ENCODE measurements at regions of chr4 and their contacts with region 1.

Region 1: GRCh38 chr4:112214390-112215264 is 17.0 kb upstream of the AP1AR start:
- DNase-seq: no peak
- H3K4me3 Mint-ChIP-seq: no peak overlapping the region
- H3K27ac Mint-ChIP-seq: no peak overlapping the region
- H3K4me1 Mint-ChIP-seq: peaks cover 8% of the 10 kb centered on the region
- H3K27me3 Mint-ChIP-seq: no peaks in the 10 kb centered on the region

Region 2: DNA sequence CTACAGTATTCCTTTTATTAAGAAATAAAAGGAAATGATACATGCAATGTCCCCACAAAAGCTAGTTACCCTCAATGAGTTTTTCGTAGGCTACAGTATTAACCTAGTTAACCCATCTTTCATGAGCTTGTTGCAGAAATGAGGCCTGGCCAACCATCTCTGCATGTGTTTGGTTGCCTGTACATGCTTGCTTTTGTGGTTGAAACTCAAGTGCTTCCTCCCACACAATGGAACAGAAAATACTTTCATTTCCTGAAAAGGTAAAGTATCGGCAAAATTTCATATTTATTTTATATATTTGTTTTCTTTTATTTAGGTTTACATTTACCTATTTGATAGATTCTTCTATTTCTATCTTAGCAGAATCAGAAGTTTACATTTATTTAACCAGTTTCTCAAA is 284.0 kb before region 1 on chr4:
- CTCF ChIA-PET with region 1: no interaction called
- POLR2A ChIA-PET with region 1: no interaction called
- intact Hi-C with region 1: no loop called
- DNase-seq: no peak
- H3K4me3 Mint-ChIP-seq: no peak overlapping the region
- H3K27ac Mint-ChIP-seq: no peak overlapping the region
- H3K4me1 Mint-ChIP-seq: no peaks in the 10 kb centered on the region
- H3K27me3 Mint-ChIP-seq: peaks cover 2% of the 10 kb centered on the region

Region 3: GRCh38 chr4:112099701-112100297 is 114.8 kb before region 1 on chr4:
- CTCF ChIA-PET with region 1: interaction called, 10 read pairs
- POLR2A ChIA-PET with region 1: no interaction called
- intact Hi-C with region 1: no loop called
- DNase-seq: no peak
- H3K4me3 Mint-ChIP-seq: no peak overlapping the region
- H3K27ac Mint-ChIP-seq: no peak overlapping the region
- H3K4me1 Mint-ChIP-seq: peaks cover 1% of the 10 kb centered on the region
- H3K27me3 Mint-ChIP-seq: peaks cover 2% of the 10 kb centered on the region

Region 4: GRCh38 chr4:112189754-112190153 is 24.9 kb before region 1 on chr4:
- CTCF ChIA-PET with region 1: no interaction called
- POLR2A ChIA-PET with region 1: no interaction called
- intact Hi-C with region 1: no loop called
- DNase-seq: no peak
- H3K4me3 Mint-ChIP-seq: no peak overlapping the region
- H3K27ac Mint-ChIP-seq: no peak overlapping the region
- H3K4me1 Mint-ChIP-seq: peaks cover 3% of the 10 kb centered on the region
- H3K27me3 Mint-ChIP-seq: no peaks in the 10 kb centered on the region

Region 5: GRCh38 chr4:112348488-112349158 is 134.0 kb after region 1 on chr4:
- CTCF ChIA-PET with region 1: no interaction called
- POLR2A ChIA-PET with region 1: no interaction called
- intact Hi-C with region 1: no loop called
- DNase-seq: no peak
- H3K4me3 Mint-ChIP-seq: no peak overlapping the region
- H3K27ac Mint-ChIP-seq: no peak overlapping the region
- H3K4me1 Mint-ChIP-seq: no peaks in the 10 kb centered on the region
- H3K27me3 Mint-ChIP-seq: no peaks in the 10 kb centered on the region

Region 6: GRCh38 chr4:112966701-112967488 is 752.3 kb after region 1 on chr4:
- CTCF ChIA-PET with region 1: no interaction called
- POLR2A ChIA-PET with region 1: no interaction called
- intact Hi-C with region 1: no loop called
- DNase-seq: no peak
- H3K4me3 Mint-ChIP-seq: no peak overlapping the region
- H3K27ac Mint-ChIP-seq: no peak overlapping the region
- H3K4me1 Mint-ChIP-seq: no peaks in the 10 kb centered on the region
- H3K27me3 Mint-ChIP-seq: peaks cover 5% of the 10 kb centered on the region